ENCODE measurements at regions of chr13 and their contacts with region 1.

Region 1: DNA sequence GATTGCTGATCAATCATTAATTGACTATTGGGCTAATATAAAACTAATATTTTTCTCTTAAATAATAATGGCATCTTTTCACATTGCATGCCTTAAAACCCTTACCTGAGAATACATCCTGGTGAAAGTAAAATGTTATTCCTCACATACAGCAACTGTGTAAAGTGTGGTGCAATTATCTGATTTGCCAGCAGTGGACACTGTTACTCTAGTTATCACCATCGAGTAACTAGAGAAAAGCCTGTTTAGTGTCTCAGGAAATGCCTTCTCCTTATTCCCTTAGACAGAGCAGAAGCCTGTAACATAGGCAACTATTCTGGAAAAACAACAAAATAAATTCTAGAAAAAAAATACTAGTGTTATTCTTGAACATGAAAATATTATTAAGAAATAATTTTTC is 459.8 kb downstream of the FGF14 start:
- DNase-seq: peak in 2 of 10 donors; percentile 49 to 53
- H3K4me3 ChIP-seq: no peak overlapping the region
- H3K27ac ChIP-seq: no peak overlapping the region
- H3K27me3 ChIP-seq: no peaks in the 10 kb centered on the region
- CTCF ChIP-seq: peak; percentile 27 to 86 (median 69)

Region 2: DNA sequence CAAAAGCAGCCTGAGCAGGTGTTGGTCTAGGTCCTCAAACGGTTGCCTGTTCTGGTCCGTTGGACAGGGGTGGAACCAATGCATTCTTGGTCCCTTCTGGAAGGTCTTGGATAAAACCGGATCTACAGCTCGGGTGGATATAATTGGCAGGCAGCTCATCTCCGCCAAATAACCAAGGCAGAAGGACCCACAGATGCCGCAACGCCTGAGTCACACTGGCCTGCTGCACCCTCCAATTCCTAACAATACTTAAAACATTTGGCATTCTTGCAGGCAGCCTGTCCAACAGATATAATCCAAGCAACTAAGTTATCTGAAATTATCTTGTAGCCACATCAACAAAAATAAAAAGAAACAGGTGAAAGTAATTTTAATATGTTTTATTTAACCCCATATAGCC is 518.8 kb after region 1 on chr13:
- intact Hi-C with region 1: loop called in 1 of 2 experiments (anchors 2 kb)
- DNase-seq: no peak
- H3K4me3 ChIP-seq: no peak overlapping the region
- H3K27ac ChIP-seq: no peak overlapping the region
- H3K27me3 ChIP-seq: peaks cover 0 to 7% (median 0%) of the 10 kb centered on the region in 45 donors
- CTCF ChIP-seq: no peak

Region 3: DNA sequence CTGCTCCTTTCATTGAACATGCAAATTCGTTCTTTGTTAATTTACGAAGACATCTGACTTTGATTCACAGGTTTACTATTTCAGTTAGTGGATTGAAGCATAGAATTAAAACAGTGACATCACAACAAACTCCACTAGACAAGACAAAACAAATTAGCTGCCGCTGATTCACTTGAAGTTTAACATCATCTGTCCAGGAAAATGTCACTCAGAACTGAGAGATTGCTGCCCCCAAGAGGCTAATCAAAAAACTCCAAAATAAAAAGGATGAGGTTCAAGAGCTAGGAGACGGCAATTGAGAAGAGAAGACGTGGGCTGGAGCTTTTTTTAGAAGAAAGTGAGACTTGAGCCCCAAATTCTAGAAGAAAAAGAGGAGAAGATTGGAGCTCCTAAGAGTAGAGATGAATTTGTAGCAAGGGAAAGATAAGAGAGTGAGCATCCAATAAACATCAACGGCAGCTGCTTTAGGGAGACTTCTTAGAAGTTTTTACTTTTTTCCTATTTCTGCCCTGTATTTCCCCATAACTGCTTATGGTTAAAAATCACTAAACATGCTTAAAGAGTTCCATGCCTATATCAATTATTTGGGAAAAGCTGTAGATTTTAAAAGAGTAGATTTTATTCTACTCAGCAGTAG is 614.0 kb after region 1 on chr13:
- intact Hi-C with region 1: loop called in 1 of 2 experiments (anchors 10 kb)
- DNase-seq: peak in 1 of 10 donors; percentile 14
- H3K4me3 ChIP-seq: peak overlapping the region in 5 of 59 donors; percentile 1 to 17 (median 8)
- H3K27ac ChIP-seq: no peak overlapping the region
- H3K27me3 ChIP-seq: no peaks in the 10 kb centered on the region
- CTCF ChIP-seq: peak in 55 of 56 donors; percentile 31 to 80 (median 62)

Region 4: DNA sequence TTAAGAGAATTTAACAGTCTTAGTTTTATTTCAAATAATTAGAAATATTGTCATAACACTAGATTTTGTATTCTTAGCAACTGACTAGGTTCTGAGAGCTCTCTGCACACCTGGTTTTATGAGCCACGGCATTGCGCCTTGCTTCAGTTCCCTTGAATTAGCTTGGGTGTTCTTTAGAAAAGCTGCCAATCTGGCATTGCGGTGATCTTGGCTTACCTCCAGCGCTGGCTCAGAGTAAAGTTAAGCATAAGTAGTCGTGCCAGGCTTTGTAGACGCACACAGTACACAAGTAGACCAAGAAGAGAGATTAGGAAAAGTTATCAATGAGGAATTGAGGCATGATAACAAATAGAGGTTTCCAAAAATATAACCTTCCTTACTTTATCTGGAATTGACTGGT is 700.4 kb after region 1 on chr13:
- intact Hi-C with region 1: no loop called
- DNase-seq: peak in 8 of 10 donors; percentile 37 to 72 (median 48)
- H3K4me3 ChIP-seq: no peak overlapping the region
- H3K27ac ChIP-seq: peak overlapping the region in 2 of 59 donors; percentile 0 to 9
- H3K27me3 ChIP-seq: no peaks in the 10 kb centered on the region
- CTCF ChIP-seq: no peak